GM12878 (cell line): ENCODE measurements at regions of chr1 and their contacts with region 1.

Region 1: DNA sequence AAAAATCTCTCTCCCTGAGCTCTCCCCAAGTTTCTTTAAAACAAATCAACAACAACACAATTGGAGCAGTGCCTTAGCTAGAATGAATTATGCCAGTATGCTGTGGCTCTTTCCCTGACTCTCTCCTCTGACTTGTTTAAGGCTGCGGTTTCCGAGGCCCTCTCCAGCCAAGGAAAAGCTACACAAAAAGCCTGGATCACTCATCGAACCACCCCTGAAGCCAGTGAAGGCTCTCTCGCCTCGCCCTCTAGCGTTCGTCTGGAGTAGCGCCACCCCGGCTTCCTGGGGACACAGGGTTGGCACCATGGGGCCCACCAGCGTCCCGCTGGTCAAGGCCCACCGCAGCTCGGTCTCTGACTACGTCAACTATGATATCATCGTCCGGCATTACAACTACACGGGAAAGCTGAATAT is 1.9 kb downstream of the S1PR1 start:
- DNase-seq: no peak
- ATAC-seq: peak; percentile 70
- H3K4me3 ChIP-seq: peak overlapping the region; percentile 81
- H3K27ac ChIP-seq: peak overlapping the region; percentile 43
- H3K4me1 ChIP-seq: peaks cover 32% of the 10 kb centered on the region
- H3K27me3 ChIP-seq: no peaks in the 10 kb centered on the region
- CTCF ChIP-seq: peak; percentile 90 to 99 (median 97)
- EP300 ChIP-seq: no peak
- POLR2A ChIP-seq: 0 out of 2 replicates have a peak, but pooled peaks have one; percentile 9
- RAD21 ChIP-seq: peak; percentile 89

Region 2: DNA sequence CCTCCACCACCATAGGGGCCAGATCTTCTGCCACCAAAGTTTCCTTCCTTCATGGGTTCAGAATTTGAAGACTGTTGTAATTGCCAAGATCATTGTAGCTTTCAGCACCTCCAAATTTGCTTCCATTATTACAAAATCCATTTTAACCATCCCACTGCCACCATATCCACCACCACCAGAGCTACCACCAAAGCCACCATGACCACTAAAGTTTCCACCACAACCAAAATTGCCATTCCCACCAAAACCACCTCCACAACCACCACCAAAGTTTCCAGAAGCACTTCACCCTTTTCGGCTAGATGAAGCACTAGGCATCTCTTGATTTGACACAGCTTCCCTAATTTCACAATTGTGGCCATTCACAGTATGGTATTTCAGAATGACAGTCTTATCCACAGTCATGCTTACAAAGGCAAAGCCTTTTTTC is 297.6 kb before region 1 on chr1:
- CTCF ChIA-PET with region 1: interaction called, 10 read pairs
- POLR2A ChIA-PET with region 1: interaction called, 10 read pairs
- RAD21 ChIA-PET with region 1: interaction called, 6 read pairs
- SMC1A ChIA-PET with region 1: no interaction called
- in situ Hi-C with region 1: no loop called
- intact Hi-C with region 1: loop called (anchors 5 kb)
- DNase-seq: peak; percentile 8
- ATAC-seq: peak; percentile 60
- H3K4me3 ChIP-seq: no peak overlapping the region
- H3K27ac ChIP-seq: no peak overlapping the region
- H3K4me1 ChIP-seq: no peaks in the 10 kb centered on the region
- H3K27me3 ChIP-seq: no peaks in the 10 kb centered on the region
- CTCF ChIP-seq: no peak
- EP300 ChIP-seq: no peak; a peak in 1 of 4 replicates
- POLR2A ChIP-seq: no peak
- RAD21 ChIP-seq: no peak

Region 3: GRCh38 chr1:101136739-101137138 is 101.9 kb before region 1 on chr1:
- CTCF ChIA-PET with region 1: interaction called, 44 read pairs
- POLR2A ChIA-PET with region 1: no interaction called
- RAD21 ChIA-PET with region 1: interaction called, 32 read pairs
- SMC1A ChIA-PET with region 1: interaction called, 49 read pairs
- in situ Hi-C with region 1: no loop called
- intact Hi-C with region 1: loop called (anchors 1 kb)
- DNase-seq: peak; percentile 68
- ATAC-seq: peak; percentile 86
- H3K4me3 ChIP-seq: no peak overlapping the region
- H3K27ac ChIP-seq: no peak overlapping the region
- H3K4me1 ChIP-seq: peaks cover 17% of the 10 kb centered on the region
- H3K27me3 ChIP-seq: no peaks in the 10 kb centered on the region
- CTCF ChIP-seq: peak; percentile 29 to 61 (median 41); a peak in 4 of 6 replicates
- EP300 ChIP-seq: no peak
- POLR2A ChIP-seq: no peak
- RAD21 ChIP-seq: peak; percentile 83

Region 4: GRCh38 chr1:101203820-101204540 is 34.7 kb before region 1 on chr1:
- CTCF ChIA-PET with region 1: interaction called, 15 read pairs
- POLR2A ChIA-PET with region 1: interaction called, 5 read pairs
- RAD21 ChIA-PET with region 1: interaction called, 13 read pairs
- SMC1A ChIA-PET with region 1: interaction called, 3 read pairs
- in situ Hi-C with region 1: no loop called
- intact Hi-C with region 1: loop called (anchors 1 kb)
- DNase-seq: no peak
- ATAC-seq: no peak
- H3K4me3 ChIP-seq: no peak overlapping the region
- H3K27ac ChIP-seq: no peak overlapping the region
- H3K4me1 ChIP-seq: peaks cover 10% of the 10 kb centered on the region
- H3K27me3 ChIP-seq: no peaks in the 10 kb centered on the region
- CTCF ChIP-seq: no peak
- EP300 ChIP-seq: no peak
- POLR2A ChIP-seq: no peak
- RAD21 ChIP-seq: no peak

Region 5: DNA sequence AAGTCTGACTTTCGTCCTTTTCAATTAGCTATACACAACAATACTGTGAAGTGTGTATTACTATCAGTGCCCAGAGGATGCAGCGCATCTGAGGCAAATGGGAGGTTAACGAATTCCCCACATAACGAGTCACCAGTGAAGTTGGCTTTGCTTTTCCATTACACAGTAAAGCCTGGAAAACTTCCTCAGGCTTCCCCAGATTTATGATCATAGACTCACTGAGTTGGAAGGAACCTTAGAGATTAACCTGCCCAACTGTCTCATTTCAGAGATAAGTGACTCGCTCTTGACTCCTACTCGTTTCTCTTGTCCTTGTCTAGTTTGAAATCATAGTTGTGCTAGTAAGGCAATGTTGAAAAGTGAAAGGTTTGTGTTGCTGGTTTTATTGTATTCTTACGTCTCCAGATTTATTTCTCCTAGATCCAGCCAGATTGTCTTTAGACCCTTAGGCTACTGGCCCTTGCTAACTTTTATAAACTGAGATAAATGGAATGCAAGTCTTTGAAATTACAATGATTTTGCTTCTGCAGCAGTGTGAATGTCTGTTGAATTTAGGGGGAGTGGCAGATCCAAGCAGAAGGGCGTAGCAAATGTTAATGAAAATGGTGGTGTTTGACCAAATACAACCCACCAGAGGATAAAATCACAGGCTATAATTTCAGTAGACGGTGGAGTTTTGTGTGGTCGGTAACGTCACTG is 15.4 kb after region 1 on chr1:
- CTCF ChIA-PET with region 1: interaction called, 48 read pairs
- POLR2A ChIA-PET with region 1: no interaction called
- RAD21 ChIA-PET with region 1: interaction called, 6 read pairs
- SMC1A ChIA-PET with region 1: interaction called, 21 read pairs
- in situ Hi-C with region 1: no loop called
- intact Hi-C with region 1: no loop called
- DNase-seq: no peak
- ATAC-seq: no peak
- H3K4me3 ChIP-seq: no peak overlapping the region
- H3K27ac ChIP-seq: no peak overlapping the region
- H3K4me1 ChIP-seq: peaks cover 10% of the 10 kb centered on the region
- H3K27me3 ChIP-seq: no peaks in the 10 kb centered on the region
- CTCF ChIP-seq: no peak
- EP300 ChIP-seq: no peak
- POLR2A ChIP-seq: no peak
- RAD21 ChIP-seq: no peak